Activated T-helper 1 cell treated with anti-CD3 and anti-CD28 coated beads, Interleukin-12 subunit alpha, Interleukin-12 subunit beta, Interleukin-2, Interleukin-4 antibody, amounts not matched to agents 30 ng/mL and 10 ng/mL and 1 ng/mL, durations not matched to agents 14 hours and 24 hours and 36 hours (primary cell): ENCODE measurements at regions of chr1 and their contacts with region 1.

Region 1: DNA sequence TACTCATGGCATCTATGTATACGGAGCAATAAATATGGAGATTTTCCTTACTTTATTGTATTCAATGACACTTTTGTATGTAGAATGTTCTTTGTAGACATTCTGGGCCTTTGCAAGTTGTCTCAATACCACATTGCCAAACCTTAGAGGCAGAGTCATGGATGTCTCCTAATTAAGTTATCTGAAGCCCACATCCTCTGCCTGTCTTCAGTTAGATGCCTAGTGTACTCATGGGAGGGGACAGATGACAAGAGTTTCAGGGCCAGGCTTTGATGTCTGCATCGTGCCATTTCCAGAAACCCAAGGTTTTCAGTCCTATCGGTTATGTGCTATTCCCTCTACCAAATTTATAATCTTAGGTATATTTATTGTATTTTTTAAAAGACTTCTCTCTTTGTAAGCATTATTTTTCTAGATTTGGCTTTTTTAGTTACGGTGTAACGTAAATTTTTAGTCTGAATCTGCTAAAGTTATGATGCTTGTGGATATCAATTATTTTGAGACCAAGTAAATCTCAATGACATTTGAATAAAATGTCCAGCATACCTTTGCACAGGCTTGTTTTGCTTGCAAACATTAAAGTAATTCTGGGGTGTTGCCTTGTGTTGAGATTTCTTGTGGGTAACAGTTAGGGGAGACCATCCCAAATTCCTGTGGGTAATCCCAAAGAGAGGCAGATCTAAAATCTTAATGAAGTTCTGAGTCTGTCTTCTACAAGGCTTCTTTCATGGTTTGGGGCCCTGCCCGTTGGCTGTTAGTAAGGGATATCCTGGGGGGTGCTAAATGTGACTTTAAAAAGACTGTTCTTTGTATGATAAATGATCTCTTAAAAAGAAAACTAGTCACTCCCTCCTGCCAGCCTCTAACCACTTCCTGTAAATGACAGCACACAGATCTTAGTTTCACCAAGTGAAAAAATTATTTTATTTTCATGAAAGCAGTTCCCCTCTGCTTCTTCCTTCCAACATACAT is 8.0 kb upstream of the MACF1 start:
- DNase-seq: peak; percentile 51
- H3K4me3 Mint-ChIP-seq: peak overlapping the region; percentile 76
- H3K27ac Mint-ChIP-seq: peak overlapping the region; percentile 96
- H3K4me1 Mint-ChIP-seq: peaks cover 77% of the 10 kb centered on the region
- H3K27me3 Mint-ChIP-seq: no peaks in the 10 kb centered on the region

Region 2: GRCh38 chr1:38898653-38899230 is 297.8 kb before region 1 on chr1:
- intact Hi-C with region 1: no loop called
- DNase-seq: no peak
- H3K4me3 Mint-ChIP-seq: no peak overlapping the region
- H3K27ac Mint-ChIP-seq: no peak overlapping the region
- H3K4me1 Mint-ChIP-seq: no peaks in the 10 kb centered on the region
- H3K27me3 Mint-ChIP-seq: peaks cover 3% of the 10 kb centered on the region

Region 3: GRCh38 chr1:39115271-39116110 is 81.0 kb before region 1 on chr1:
- intact Hi-C with region 1: loop called (anchors 1 kb)
- DNase-seq: no peak
- H3K4me3 Mint-ChIP-seq: no peak overlapping the region
- H3K27ac Mint-ChIP-seq: no peak overlapping the region
- H3K4me1 Mint-ChIP-seq: peaks cover 5% of the 10 kb centered on the region
- H3K27me3 Mint-ChIP-seq: peaks cover 7% of the 10 kb centered on the region

Region 4: DNA sequence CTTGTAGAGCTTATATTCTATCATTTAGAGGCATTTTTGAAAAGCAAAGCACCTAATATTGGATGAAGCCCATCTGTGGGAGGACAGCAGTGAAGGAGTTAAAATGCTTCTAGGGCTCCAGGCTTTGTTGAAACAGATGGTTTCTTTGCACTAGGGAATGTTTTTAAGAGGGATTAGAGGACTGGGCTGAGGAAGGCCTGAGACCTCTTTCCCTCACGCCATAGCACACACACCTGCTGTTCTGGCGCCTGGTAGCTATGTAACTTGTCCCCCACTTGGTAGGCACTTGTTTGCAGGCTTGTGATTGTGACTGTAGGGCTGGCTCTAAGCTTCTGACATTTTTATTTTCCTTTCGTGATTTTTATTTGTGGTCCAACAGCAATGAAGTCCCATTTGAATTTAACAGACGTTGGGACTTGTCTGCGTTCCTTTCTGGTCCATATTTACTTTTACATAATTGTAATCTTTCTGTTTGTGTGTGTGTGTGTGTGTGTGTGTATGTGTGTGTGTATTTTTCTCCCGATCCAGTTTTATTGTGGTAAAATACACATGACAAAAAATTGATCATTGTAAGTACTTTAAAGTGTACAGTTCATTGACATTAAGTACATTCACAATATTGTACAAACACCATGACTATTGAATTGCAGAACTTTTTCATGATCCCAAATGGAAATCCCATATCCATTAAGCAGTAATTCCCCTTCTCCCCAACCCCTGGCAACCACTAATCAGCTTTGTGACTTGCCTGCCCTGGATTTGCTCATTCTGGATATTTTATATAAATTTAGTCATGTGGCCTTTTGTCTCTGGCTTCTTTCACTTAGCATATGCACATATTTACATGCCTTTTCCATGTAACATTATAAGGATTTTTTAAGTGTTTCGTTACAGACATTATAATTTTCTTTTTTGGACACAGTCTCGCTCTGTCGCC is 25.5 kb before region 1 on chr1:
- intact Hi-C with region 1: no loop called
- DNase-seq: no peak
- H3K4me3 Mint-ChIP-seq: no peak overlapping the region
- H3K27ac Mint-ChIP-seq: no peak overlapping the region
- H3K4me1 Mint-ChIP-seq: no peaks in the 10 kb centered on the region
- H3K27me3 Mint-ChIP-seq: peaks cover 9% of the 10 kb centered on the region

Region 5: GRCh38 chr1:39214998-39215873 is 18.7 kb after region 1 on chr1:
- intact Hi-C with region 1: loop called (anchors 1 kb)
- DNase-seq: peak; percentile 30
- H3K4me3 Mint-ChIP-seq: peak overlapping the region; percentile 86
- H3K27ac Mint-ChIP-seq: peak overlapping the region; percentile 91
- H3K4me1 Mint-ChIP-seq: peaks cover 58% of the 10 kb centered on the region
- H3K27me3 Mint-ChIP-seq: no peaks in the 10 kb centered on the region

Region 6: GRCh38 chr1:39666772-39667171 is 470.2 kb after region 1 on chr1:
- intact Hi-C with region 1: loop called (anchors 1 kb)
- DNase-seq: peak; percentile 46
- H3K4me3 Mint-ChIP-seq: peak overlapping the region; percentile 23
- H3K27ac Mint-ChIP-seq: peak overlapping the region; percentile 62
- H3K4me1 Mint-ChIP-seq: peaks cover 38% of the 10 kb centered on the region
- H3K27me3 Mint-ChIP-seq: peaks cover 9% of the 10 kb centered on the region